Endothelial cell of umbilical vein (primary cell): ENCODE measurements at regions of chr12 and their contacts with region 1.

Region 1: GRCh38 chr12:76037130-76038103 is 5.8 kb upstream of the PHLDA1 start:
- DNase-seq: peak; percentile 87
- H3K4me3 ChIP-seq: peak overlapping the region in 1 of 3 experiments; percentile 45
- H3K27ac ChIP-seq: peak overlapping the region; percentile 88
- H3K4me1 ChIP-seq: peaks cover 26% of the 10 kb centered on the region
- H3K27me3 ChIP-seq: no peaks in the 10 kb centered on the region
- CTCF ChIP-seq: peak; percentile 68 to 79
- POLR2A ChIP-seq: peak; percentile 60

Region 2: GRCh38 chr12:75334384-75335030 is 702.9 kb before region 1 on chr12 and contains the start of gene GLIPR1L1:
- CTCF ChIA-PET with region 1: interaction called, 4 read pairs
- POLR2A ChIA-PET with region 1: no interaction called
- dilution Hi-C with region 1: no loop called
- intact Hi-C with region 1: loop called (anchors 1 kb)
- DNase-seq: peak; percentile 88
- H3K4me3 ChIP-seq: peak within 1 kb of the TSS; percentile 20 to 58 (median 56)
- H3K27ac ChIP-seq: no peak within 1 kb of the TSS
- H3K4me1 ChIP-seq: peaks cover 10% of the 10 kb centered on the region
- H3K27me3 ChIP-seq: peaks cover 2 to 13% of the 10 kb centered on the region in 2 experiments
- CTCF ChIP-seq: peak; percentile 85 to 91
- POLR2A ChIP-seq: no peak
- total RNA-seq, gene GLIPR1L1: not detected in 2 replicates

Region 3: GRCh38 chr12:75480469-75480949 is 556.9 kb before region 1 on chr12 and contains the start of gene GLIPR1:
- CTCF ChIA-PET with region 1: interaction called, 19 read pairs
- POLR2A ChIA-PET with region 1: interaction called, 3 read pairs
- dilution Hi-C with region 1: no loop called
- intact Hi-C with region 1: loop called (anchors 1 kb)
- DNase-seq: peak; percentile 93
- H3K4me3 ChIP-seq: peak within 1 kb of the TSS; percentile 37 to 79 (median 47)
- H3K27ac ChIP-seq: peak within 1 kb of the TSS; percentile 80
- H3K4me1 ChIP-seq: peaks cover 29% of the 10 kb centered on the region
- H3K27me3 ChIP-seq: no peaks in the 10 kb centered on the region
- CTCF ChIP-seq: no peak
- POLR2A ChIP-seq: peak; percentile 96
- total RNA-seq, gene GLIPR1: 74.1 and 98.8 TPM in 2 replicates

Region 4: GRCh38 chr12:75560167-75560566 is 477.2 kb before region 1 on chr12:
- CTCF ChIA-PET with region 1: interaction called, 28 read pairs
- POLR2A ChIA-PET with region 1: interaction called, 3 read pairs
- dilution Hi-C with region 1: no loop called
- intact Hi-C with region 1: loop called (anchors 1 kb)
- DNase-seq: peak; percentile 70
- H3K4me3 ChIP-seq: no peak overlapping the region
- H3K27ac ChIP-seq: no peak overlapping the region
- H3K4me1 ChIP-seq: peaks cover 12% of the 10 kb centered on the region
- H3K27me3 ChIP-seq: no peaks in the 10 kb centered on the region
- CTCF ChIP-seq: peak in 1 of 2 donors; percentile 40
- POLR2A ChIP-seq: no peak

Region 5: GRCh38 chr12:75705749-75706711 is 331.4 kb before region 1 on chr12:
- CTCF ChIA-PET with region 1: interaction called, 13 read pairs
- POLR2A ChIA-PET with region 1: no interaction called
- dilution Hi-C with region 1: no loop called
- intact Hi-C with region 1: no loop called
- DNase-seq: peak; percentile 98
- H3K4me3 ChIP-seq: peak overlapping the region in 1 of 3 experiments; percentile 37
- H3K27ac ChIP-seq: peak overlapping the region; percentile 84
- H3K4me1 ChIP-seq: peaks cover 44% of the 10 kb centered on the region
- H3K27me3 ChIP-seq: no peaks in the 10 kb centered on the region
- CTCF ChIP-seq: no peak
- POLR2A ChIP-seq: peak; percentile 49

Region 6: GRCh38 chr12:75877763-75878621 is 159.4 kb before region 1 on chr12:
- CTCF ChIA-PET with region 1: no interaction called
- POLR2A ChIA-PET with region 1: no interaction called
- dilution Hi-C with region 1: no loop called
- intact Hi-C with region 1: no loop called
- DNase-seq: peak; percentile 68
- H3K4me3 ChIP-seq: no peak overlapping the region
- H3K27ac ChIP-seq: no peak overlapping the region
- H3K4me1 ChIP-seq: peaks cover 7% of the 10 kb centered on the region
- H3K27me3 ChIP-seq: no peaks in the 10 kb centered on the region
- CTCF ChIP-seq: no peak
- POLR2A ChIP-seq: no peak